T-cell (primary cell): ENCODE measurements at regions of chr4 and their contacts with region 1.

Region 1: DNA sequence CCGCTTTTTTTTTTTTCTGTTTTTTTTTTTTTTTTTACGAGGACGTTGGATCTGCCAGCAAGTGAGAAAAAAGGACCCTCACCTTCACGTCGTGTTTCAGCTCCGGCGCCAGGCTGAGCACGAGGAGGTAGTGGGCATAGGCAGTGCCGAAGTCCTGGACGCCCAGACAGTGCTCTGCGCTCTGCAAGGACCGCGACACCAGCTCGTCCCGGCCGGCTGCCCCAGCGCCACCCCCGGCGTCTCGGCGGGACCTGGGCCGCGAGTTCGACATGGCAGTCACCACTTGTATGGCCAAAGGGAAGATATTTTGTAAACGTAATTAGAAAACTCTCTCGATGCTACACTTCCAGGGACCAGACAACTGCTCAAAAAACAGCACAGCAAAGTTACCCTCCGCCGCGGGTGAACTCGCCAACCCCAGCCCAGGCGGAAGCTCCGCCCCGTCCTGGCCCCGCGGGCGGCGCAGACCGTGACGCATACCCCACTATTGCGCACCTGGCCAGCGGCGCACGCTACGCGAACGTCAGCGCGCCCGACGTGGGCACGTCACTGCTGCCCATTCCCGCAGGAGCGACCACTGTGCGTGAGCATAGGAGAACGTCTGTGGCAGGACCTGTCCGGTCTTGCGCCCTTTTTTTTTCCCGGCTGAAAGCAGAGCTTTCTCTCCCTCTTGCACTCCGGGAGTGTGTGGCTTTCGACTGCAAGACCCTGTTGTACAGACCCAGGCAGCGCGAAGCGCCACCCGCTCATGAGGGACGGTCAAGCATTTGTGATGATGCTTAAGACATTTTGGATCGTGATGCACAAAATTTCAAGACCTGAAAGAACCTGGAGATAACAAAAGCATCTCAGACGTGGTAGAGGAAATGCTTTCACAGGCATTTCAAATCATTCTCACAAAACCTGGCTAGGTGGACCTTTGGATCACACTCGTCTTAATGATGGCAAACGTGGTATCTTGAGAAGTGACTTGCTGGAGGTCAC is at the start of gene PRMT9:
- DNase-seq: peak; percentile 73 to 92 (median 83)
- ATAC-seq: peak; percentile 97 to 100 (median 99)
- H3K4me3 ChIP-seq: peak within 1 kb of the TSS; percentile 73 to 99
- H3K4me3 Mint-ChIP-seq: peak within 1 kb of the TSS; percentile 90 to 93 (median 93)
- H3K27ac ChIP-seq: peak within 1 kb of the TSS; percentile 87
- H3K27ac Mint-ChIP-seq: peak within 1 kb of the TSS; percentile 95
- H3K4me1 ChIP-seq: peaks cover 3 to 11% of the 10 kb centered on the region in 2 experiments
- H3K4me1 Mint-ChIP-seq: peaks cover 31 to 40% (median 33%) of the 10 kb centered on the region in 3 donors
- H3K27me3 ChIP-seq: no peaks in the 10 kb centered on the region
- H3K27me3 Mint-ChIP-seq: peaks cover 8 to 10% of the 10 kb centered on the region in 2 donors
- total RNA-seq, gene PRMT9: 9.8 to 17.3 (median 12.3) TPM

Region 2: GRCh38 chr4:146465628-146466027 is 1218.4 kb before region 1 on chr4:
- CTCF ChIA-PET with region 1: no interaction called
- POLR2A ChIA-PET with region 1: no interaction called
- DNase-seq: no peak
- ATAC-seq: no peak
- H3K4me3 ChIP-seq: no peak overlapping the region
- H3K4me3 Mint-ChIP-seq: no peak overlapping the region
- H3K27ac ChIP-seq: no peak overlapping the region
- H3K27ac Mint-ChIP-seq: no peak overlapping the region
- H3K4me1 ChIP-seq: no peaks in the 10 kb centered on the region
- H3K4me1 Mint-ChIP-seq: peaks cover 5 to 6% (median 6%) of the 10 kb centered on the region in 3 donors
- H3K27me3 ChIP-seq: no peaks in the 10 kb centered on the region
- H3K27me3 Mint-ChIP-seq: no peaks in the 10 kb centered on the region

Region 3: DNA sequence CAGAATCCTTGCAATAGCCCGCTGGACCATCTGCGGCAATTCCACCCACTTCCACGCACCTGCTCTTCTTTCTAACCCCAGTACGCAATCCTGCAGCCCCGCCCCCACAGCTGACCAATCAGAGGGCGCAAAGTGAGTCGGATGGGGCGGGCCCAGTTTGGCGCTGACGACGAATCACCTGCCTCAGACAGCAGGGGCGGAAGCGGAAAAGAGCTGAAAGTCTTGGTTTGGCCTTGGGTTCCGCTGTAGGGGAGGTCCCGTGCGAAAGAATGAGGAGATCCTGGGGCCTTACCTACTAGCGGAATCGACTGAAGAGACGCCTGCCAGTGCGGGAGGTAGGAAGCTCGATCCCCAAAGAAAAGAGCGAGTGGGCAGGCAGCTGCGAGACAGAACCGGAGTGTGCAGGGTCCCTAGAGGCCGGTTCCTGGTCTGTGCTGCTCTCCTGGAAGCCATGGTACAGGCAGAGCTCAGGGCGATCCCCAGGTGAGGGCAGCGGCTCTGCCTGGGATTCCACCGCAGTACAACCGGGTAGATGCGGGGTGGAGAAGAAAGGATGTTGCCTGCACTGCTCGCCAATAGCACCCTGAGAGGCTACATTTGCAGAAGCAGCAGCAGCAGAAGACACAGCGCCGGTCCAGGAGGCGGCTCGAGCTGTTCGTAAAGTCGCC is 66.7 kb before region 1 on chr4 and contains the start of gene TMEM184C:
- CTCF ChIA-PET with region 1: interaction called, 5 to 20 read pairs
- POLR2A ChIA-PET with region 1: interaction called, 4 to 47 read pairs
- DNase-seq: peak; percentile 96 to 99 (median 99)
- ATAC-seq: peak; percentile 94 to 99 (median 98)
- H3K4me3 ChIP-seq: peak within 1 kb of the TSS; percentile 81 to 90
- H3K4me3 Mint-ChIP-seq: peak within 1 kb of the TSS; percentile 95 to 96 (median 95)
- H3K27ac ChIP-seq: peak within 1 kb of the TSS; percentile 90
- H3K27ac Mint-ChIP-seq: peak within 1 kb of the TSS; percentile 96 to 98
- H3K4me1 ChIP-seq: peaks cover 31 to 32% of the 10 kb centered on the region in 2 experiments
- H3K4me1 Mint-ChIP-seq: peaks cover 33 to 52% (median 45%) of the 10 kb centered on the region in 3 donors
- H3K27me3 ChIP-seq: peaks cover 0 to 2% of the 10 kb centered on the region in 2 experiments
- H3K27me3 Mint-ChIP-seq: peaks cover 0 to 5% of the 10 kb centered on the region in 2 donors
- total RNA-seq, gene TMEM184C: 13.2 to 27.2 (median 21.8) TPM

Region 4: DNA sequence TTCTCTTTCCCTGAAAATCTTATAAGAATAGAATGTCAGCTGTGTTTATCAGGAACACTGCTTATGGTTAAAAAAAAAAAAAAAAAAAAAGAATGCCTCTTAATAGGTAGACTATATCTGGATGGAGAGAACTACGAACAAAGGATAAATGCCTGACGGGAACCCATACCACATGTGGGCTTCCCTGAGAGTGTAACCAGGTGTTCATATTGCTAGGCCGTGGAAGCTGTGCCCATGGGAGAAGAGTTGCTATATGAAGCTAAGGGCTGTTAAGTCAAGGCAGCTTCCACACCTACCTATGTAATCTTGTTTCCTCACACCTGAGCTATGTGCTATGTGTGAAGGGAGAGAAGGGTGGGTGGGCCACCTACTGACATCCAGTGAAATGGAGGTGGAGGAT is 39.5 kb before region 1 on chr4:
- CTCF ChIA-PET with region 1: interaction called in 1 of 2 experiments, 3 read pairs
- POLR2A ChIA-PET with region 1: interaction called in 1 of 2 experiments, 11 read pairs
- DNase-seq: no peak
- ATAC-seq: no peak
- H3K4me3 ChIP-seq: no peak overlapping the region
- H3K4me3 Mint-ChIP-seq: no peak overlapping the region
- H3K27ac ChIP-seq: no peak overlapping the region
- H3K27ac Mint-ChIP-seq: no peak overlapping the region
- H3K4me1 ChIP-seq: no peaks in the 10 kb centered on the region
- H3K4me1 Mint-ChIP-seq: peaks cover 45 to 56% (median 50%) of the 10 kb centered on the region in 3 donors
- H3K27me3 ChIP-seq: no peaks in the 10 kb centered on the region
- H3K27me3 Mint-ChIP-seq: no peaks in the 10 kb centered on the region

Region 5: DNA sequence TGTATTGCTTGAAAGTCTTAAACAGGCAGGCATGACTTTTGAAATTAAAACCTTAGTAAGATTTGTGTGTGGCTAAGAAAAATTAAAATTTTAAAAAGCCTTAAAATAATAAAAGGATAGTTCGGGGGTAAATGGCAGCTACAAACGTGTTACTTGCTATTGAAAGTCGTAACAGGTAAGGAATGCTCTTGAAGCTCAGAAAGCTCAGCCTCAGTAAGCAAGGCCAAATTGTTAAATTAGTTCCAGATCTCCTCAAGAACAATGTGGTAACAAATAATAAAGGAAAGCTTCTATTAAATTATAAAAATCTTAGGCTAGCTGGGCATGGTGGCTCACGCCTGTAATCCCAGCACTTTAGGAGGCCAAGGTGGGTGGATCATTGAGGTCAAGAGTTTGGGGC is 25.5 kb before region 1 on chr4:
- CTCF ChIA-PET with region 1: no interaction called
- POLR2A ChIA-PET with region 1: no interaction called
- DNase-seq: no peak
- ATAC-seq: no peak
- H3K4me3 ChIP-seq: no peak overlapping the region
- H3K4me3 Mint-ChIP-seq: no peak overlapping the region
- H3K27ac ChIP-seq: no peak overlapping the region
- H3K27ac Mint-ChIP-seq: no peak overlapping the region
- H3K4me1 ChIP-seq: no peaks in the 10 kb centered on the region
- H3K4me1 Mint-ChIP-seq: peaks cover 0 to 5% (median 0%) of the 10 kb centered on the region in 3 donors
- H3K27me3 ChIP-seq: no peaks in the 10 kb centered on the region
- H3K27me3 Mint-ChIP-seq: no peaks in the 10 kb centered on the region